Right ventricle myocardium inferior (tissue), 1 donor: ENCODE measurements at regions of chr14 and their contacts with region 1.

Region 1: GRCh38 chr14:103333754-103334643 is at the start of gene EIF5:
- DNase-seq: peak; percentile 99
- ATAC-seq: peak; percentile 96
- total RNA-seq, gene EIF5: 252 TPM

Region 2: DNA sequence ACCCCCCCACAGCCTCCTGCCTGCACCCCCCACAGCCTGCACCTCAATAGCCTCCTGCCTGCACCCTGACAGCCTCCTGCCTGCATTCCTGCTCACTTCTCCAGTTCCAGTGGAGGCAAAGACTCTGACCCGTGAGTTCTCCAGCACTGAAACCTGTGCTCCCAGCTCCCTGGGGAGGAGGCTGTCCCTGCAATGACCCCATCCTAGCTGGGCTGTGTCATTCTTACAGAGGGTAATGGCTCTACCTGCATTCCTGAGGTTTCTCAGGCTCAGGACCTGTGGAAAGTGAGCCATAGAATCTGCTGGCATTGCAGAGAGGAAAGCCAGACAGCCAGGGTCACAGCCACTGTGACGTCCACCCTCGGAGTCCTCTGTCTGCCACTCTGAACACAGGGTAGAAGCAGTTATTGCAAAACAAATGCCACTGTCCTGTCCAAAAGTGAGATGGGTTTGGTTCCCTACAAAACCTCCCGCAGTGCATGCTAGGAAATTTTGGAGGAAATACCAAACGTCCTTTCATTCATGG is 173.1 kb before region 1 on chr14:
- intact Hi-C with region 1: no loop called
- DNase-seq: no peak
- ATAC-seq: peak; percentile 35

Region 3: GRCh38 chr14:103257201-103257962 is 76.6 kb before region 1 on chr14:
- intact Hi-C with region 1: no loop called
- DNase-seq: no peak
- ATAC-seq: no peak

Region 4: GRCh38 chr14:103292426-103293374 is 41.3 kb before region 1 on chr14:
- intact Hi-C with region 1: no loop called
- DNase-seq: peak; percentile 77
- ATAC-seq: peak; percentile 89

Region 5: GRCh38 chr14:103385152-103385993 is 51.4 kb after region 1 on chr14 and contains the start of gene MARK3:
- intact Hi-C with region 1: loop called (anchors 2 kb)
- DNase-seq: peak; percentile 99
- ATAC-seq: peak; percentile 99
- total RNA-seq, gene MARK3: 123 TPM